Ovary (tissue), 10 donors: ENCODE measurements at regions of chr19 and their contacts with region 1.

Region 1: GRCh38 chr19:55117636-55118391 is at the start of gene PPP1R12C:
- DNase-seq: peak; percentile 97 to 99 (median 99)
- H3K4me3 ChIP-seq: peak within 1 kb of the TSS; percentile 61
- H3K27ac ChIP-seq: peak within 1 kb of the TSS; percentile 76 to 81
- H3K4me1 ChIP-seq: peaks cover 17% of the 10 kb centered on the region
- H3K27me3 ChIP-seq: no peaks in the 10 kb centered on the region
- CTCF ChIP-seq: peak in 1 of 3 donors; percentile 28
- EP300 ChIP-seq: peak; percentile 67
- POLR2A ChIP-seq: no peak
- total RNA-seq, gene PPP1R12C: 45.4 to 152 (median 110) TPM

Region 2: DNA sequence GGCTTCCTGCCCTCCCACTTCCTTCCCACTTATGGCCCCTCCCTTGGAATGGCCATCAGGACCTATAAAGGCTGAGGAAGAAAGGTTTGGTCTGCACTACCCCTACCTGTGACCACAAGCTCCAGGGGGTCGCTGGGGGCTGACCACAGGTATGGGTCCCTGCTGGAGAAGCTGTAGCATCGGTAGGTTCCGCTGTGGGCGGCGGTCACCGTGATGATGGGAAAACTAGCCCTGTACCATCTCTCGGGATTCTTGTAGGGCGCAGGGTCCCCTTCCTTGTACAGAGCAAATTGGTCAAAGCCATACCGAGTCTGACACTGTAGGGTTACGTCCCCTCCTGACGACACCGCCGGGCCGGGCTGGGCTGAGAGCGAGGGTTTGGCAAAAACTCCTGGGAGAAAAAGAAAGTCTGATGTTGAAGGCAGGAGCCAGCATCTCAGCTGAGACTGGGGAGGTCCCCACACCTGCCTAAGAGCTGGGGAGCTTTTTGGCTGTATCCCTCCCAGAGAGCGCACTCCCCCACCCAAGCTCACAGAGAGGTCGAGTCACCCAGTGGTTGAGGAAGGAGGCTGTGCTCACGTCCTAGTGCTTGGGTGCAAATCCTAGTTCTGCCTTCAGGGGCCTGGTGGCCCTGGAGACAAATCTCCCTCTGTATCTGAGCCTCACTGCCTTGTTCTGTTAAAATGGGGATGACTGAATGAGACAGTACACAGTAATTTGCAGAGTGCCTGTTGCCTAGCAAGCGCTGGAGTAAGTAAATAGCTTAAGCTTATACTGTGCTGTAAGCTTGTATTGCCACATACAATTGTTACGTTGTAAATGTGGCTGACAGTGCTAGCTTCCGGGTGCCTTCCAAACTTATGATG is 90.1 kb before region 1 on chr19:
- intact Hi-C with region 1: no loop called
- DNase-seq: no peak
- H3K4me3 ChIP-seq: no peak overlapping the region
- H3K27ac ChIP-seq: no peak overlapping the region
- H3K4me1 ChIP-seq: no peaks in the 10 kb centered on the region
- H3K27me3 ChIP-seq: no peaks in the 10 kb centered on the region
- CTCF ChIP-seq: no peak
- EP300 ChIP-seq: no peak
- POLR2A ChIP-seq: no peak

Region 3: DNA sequence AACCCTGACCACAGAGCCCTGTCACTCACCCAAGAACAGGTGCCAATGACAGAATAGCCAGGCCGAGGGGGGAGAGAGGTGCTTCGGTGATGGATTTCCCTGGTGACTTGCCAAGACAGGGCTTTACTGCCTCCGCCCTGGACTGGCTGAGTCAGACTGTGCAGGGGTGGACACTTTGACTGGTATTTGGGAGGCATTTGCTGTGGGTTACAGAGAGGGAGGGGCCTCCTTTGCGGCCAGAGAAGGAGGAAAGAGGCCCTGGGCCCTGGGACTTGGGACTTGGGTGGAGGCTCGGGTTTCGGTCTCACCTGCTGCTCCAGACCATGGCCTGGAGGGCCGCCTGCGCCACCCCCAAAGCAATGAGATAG is 46.7 kb before region 1 on chr19:
- intact Hi-C with region 1: loop called in 1 of 4 experiments (anchors 10 kb)
- DNase-seq: no peak
- H3K4me3 ChIP-seq: no peak overlapping the region
- H3K27ac ChIP-seq: no peak overlapping the region
- H3K4me1 ChIP-seq: no peaks in the 10 kb centered on the region
- H3K27me3 ChIP-seq: no peaks in the 10 kb centered on the region
- CTCF ChIP-seq: no peak
- EP300 ChIP-seq: no peak
- POLR2A ChIP-seq: no peak

Region 4: GRCh38 chr19:55228015-55228391 is 110.2 kb after region 1 on chr19:
- intact Hi-C with region 1: no loop called
- DNase-seq: peak in 1 of 5 donors; percentile 28
- H3K4me3 ChIP-seq: no peak overlapping the region
- H3K27ac ChIP-seq: no peak overlapping the region
- H3K4me1 ChIP-seq: no peaks in the 10 kb centered on the region
- H3K27me3 ChIP-seq: no peaks in the 10 kb centered on the region
- CTCF ChIP-seq: no peak
- EP300 ChIP-seq: no peak
- POLR2A ChIP-seq: no peak

Region 5: GRCh38 chr19:55258828-55259539 is 141.2 kb after region 1 on chr19 and contains the start of gene PPP6R1:
- intact Hi-C with region 1: loop called in 1 of 4 experiments (anchors 5 kb)
- DNase-seq: peak; percentile 98 to 100 (median 98)
- H3K4me3 ChIP-seq: peak within 1 kb of the TSS; percentile 92
- H3K27ac ChIP-seq: peak within 1 kb of the TSS; percentile 70 to 84
- H3K4me1 ChIP-seq: peaks cover 18% of the 10 kb centered on the region
- H3K27me3 ChIP-seq: no peaks in the 10 kb centered on the region
- CTCF ChIP-seq: peak in 1 of 3 donors; percentile 61
- EP300 ChIP-seq: peak; percentile 10
- POLR2A ChIP-seq: peak; percentile 75
- total RNA-seq, gene PPP6R1: 14.1 to 52.2 (median 46.3) TPM

Region 6: GRCh38 chr19:55632463-55632834 is 514.6 kb after region 1 on chr19:
- intact Hi-C with region 1: loop called in 1 of 4 experiments (anchors 10 kb)
- DNase-seq: peak; percentile 63 to 93 (median 81)
- H3K4me3 ChIP-seq: no peak overlapping the region
- H3K27ac ChIP-seq: no peak overlapping the region
- H3K4me1 ChIP-seq: peaks cover 10% of the 10 kb centered on the region
- H3K27me3 ChIP-seq: no peaks in the 10 kb centered on the region
- CTCF ChIP-seq: peak; percentile 77 to 90 (median 79)
- EP300 ChIP-seq: no peak
- POLR2A ChIP-seq: no peak

Region 7: DNA sequence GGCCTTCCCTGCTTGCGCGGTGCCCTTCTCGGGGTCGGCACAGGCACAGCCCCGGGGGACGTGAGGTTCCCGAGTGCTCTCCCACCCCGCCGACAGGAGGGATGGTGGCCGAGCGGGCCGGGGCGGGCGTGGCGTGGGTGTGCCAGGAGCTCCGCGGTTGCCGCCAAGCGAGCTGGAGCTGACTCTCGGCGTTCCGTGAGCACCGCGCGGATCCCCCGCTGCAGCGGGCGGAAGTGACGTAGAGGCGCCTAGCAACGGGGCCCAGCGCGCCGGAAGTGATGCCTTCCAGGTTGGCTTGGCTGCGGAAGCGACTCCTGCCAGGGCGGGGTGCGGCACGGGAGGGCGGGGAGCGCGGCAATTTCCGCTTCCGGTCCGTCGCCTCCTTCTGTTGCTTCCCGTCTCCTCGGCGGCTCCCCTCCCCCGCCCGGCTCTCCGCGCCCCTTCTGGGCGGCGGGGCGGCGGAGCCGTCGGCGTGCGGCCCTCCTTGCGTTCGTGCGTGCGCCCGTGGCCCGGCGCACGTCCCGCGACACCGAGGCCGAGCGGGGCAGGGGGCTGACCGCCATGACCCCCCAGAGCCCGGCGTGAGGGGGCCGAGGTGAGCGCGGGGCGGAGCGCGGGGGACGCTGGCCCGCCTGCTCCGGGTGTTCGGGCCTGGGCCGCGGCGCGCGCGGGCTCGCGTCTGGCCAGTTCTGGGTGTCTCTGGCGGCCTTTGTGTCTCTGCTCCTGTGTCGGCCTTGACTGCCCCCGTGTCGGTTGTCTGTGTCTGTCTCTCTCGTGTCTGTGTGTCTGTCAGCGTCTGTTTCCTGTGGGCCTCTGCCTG is 557.2 kb after region 1 on chr19 and contains the start of gene EPN1:
- intact Hi-C with region 1: loop called in 1 of 4 experiments (anchors 10 kb)
- DNase-seq: peak; percentile 97 to 98 (median 97)
- H3K4me3 ChIP-seq: peak within 1 kb of the TSS; percentile 71
- H3K27ac ChIP-seq: peak within 1 kb of the TSS; percentile 69 to 83
- H3K4me1 ChIP-seq: peaks cover 12% of the 10 kb centered on the region
- H3K27me3 ChIP-seq: no peaks in the 10 kb centered on the region
- CTCF ChIP-seq: no peak
- EP300 ChIP-seq: no peak
- POLR2A ChIP-seq: peak; percentile 51
- total RNA-seq, gene EPN1: 53.4 to 187 (median 142) TPM